Naive thymus-derived CD4-positive, alpha-beta T cell (primary cell): ENCODE measurements at regions of chr3 and their contacts with region 1.

Region 1: GRCh38 chr3:47164007-47164881 is at the start of gene SETD2:
- DNase-seq: peak; percentile 67 to 86 (median 82)
- ATAC-seq: peak; percentile 92
- H3K4me3 ChIP-seq: peak within 1 kb of the TSS; percentile 77
- H3K4me3 Mint-ChIP-seq: peak within 1 kb of the TSS; percentile 90 to 99 (median 98)
- H3K27ac ChIP-seq: peak within 1 kb of the TSS; percentile 96
- H3K27ac Mint-ChIP-seq: peak within 1 kb of the TSS; percentile 94 to 99 (median 99)
- H3K4me1 ChIP-seq: peaks cover 30 to 36% of the 10 kb centered on the region in 2 donors
- H3K4me1 Mint-ChIP-seq: peaks cover 34 to 68% (median 56%) of the 10 kb centered on the region in 7 donors
- H3K27me3 ChIP-seq: no peaks in the 10 kb centered on the region
- H3K27me3 Mint-ChIP-seq: no peaks in the 10 kb centered on the region
- total RNA-seq, gene SETD2: 49.2 to 77.3 (median 71.1) TPM

Region 2: DNA sequence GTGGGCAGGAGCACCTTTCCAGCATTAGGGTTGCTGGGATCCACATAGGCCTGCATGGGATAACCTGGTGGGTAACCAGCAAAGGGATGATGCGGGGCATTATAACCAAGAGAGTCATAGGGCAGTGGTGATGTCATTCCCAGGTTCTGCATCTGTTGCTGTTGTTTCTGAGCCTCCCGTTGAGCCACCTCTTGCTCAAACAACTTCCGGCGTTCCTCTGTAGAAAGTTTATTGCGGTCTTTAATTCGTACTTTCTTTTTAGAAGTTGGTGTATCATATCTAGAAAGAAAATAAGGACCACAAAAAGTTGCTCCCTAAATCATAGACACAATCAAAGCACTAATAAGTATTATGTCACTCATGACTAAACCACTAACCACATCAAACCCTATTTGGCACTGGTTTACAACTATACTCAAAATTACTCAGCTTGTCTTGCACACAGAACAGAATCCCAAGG is 107.0 kb before region 1 on chr3:
- CTCF ChIA-PET with region 1: no interaction called
- POLR2A ChIA-PET with region 1: no interaction called
- intact Hi-C with region 1: loop called in 1 of 2 experiments (anchors 10 kb)
- DNase-seq: peak in 8 of 9 donors; percentile 32 to 75 (median 58)
- ATAC-seq: peak; percentile 88
- H3K4me3 ChIP-seq: no peak overlapping the region
- H3K4me3 Mint-ChIP-seq: peak overlapping the region in 9 of 10 donors; percentile 15 to 60 (median 45)
- H3K27ac ChIP-seq: peak overlapping the region; percentile 23
- H3K27ac Mint-ChIP-seq: peak overlapping the region; percentile 51 to 91 (median 85)
- H3K4me1 ChIP-seq: peaks cover 15 to 18% of the 10 kb centered on the region in 2 donors
- H3K4me1 Mint-ChIP-seq: peaks cover 23 to 60% (median 47%) of the 10 kb centered on the region in 7 donors
- H3K27me3 ChIP-seq: no peaks in the 10 kb centered on the region
- H3K27me3 Mint-ChIP-seq: no peaks in the 10 kb centered on the region

Region 3: GRCh38 chr3:47152578-47152977 is 11.7 kb before region 1 on chr3:
- CTCF ChIA-PET with region 1: interaction called, 5 read pairs
- POLR2A ChIA-PET with region 1: interaction called, 11 read pairs
- intact Hi-C with region 1: loop called in 1 of 2 experiments (anchors 1 kb)
- DNase-seq: no peak
- ATAC-seq: no peak
- H3K4me3 ChIP-seq: no peak overlapping the region
- H3K4me3 Mint-ChIP-seq: peak overlapping the region in 9 of 10 donors; percentile 1 to 65 (median 48)
- H3K27ac ChIP-seq: no peak overlapping the region
- H3K27ac Mint-ChIP-seq: peak overlapping the region in 4 of 9 donors; percentile 14 to 62 (median 39)
- H3K4me1 ChIP-seq: peaks cover 17 to 23% of the 10 kb centered on the region in 2 donors
- H3K4me1 Mint-ChIP-seq: peaks cover 39 to 92% (median 85%) of the 10 kb centered on the region in 7 donors
- H3K27me3 ChIP-seq: no peaks in the 10 kb centered on the region
- H3K27me3 Mint-ChIP-seq: no peaks in the 10 kb centered on the region

Region 4: DNA sequence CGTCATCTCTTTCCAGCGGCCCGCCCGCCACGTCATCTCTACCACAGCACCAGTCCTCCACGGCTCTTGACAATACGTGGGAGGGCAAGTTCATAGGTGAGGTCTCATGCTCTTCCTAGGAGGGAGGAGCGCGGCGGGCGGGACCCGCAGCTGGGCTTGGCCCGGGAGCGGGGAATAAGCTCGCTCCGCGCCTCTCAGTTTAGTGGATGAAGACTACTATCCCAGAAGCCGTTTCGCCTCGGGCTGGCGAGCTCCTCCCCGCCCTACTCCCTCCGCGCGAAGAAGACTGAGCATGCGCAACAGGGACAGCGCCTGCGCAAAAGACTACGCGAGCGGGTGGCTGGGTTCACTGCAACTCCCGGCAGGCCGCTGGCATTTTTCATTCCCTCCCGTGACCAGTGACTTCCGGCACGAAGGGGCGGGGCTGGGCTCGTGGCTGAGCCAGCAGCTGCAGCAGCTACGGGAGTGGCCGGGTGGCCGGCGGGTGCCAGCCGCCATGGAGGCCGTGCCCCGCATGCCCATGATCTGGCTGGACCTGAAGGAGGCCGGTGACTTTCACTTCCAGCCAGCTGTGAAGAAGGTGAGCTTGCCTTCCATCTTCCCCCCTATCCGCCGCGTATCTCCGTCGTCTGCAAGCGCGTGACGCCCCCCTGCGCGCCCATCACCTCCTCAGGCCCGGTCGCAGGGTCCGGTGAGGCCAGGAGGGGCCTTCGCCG is 216.5 kb after region 1 on chr3 and contains the start of gene PTPN23:
- CTCF ChIA-PET with region 1: interaction called, 3 read pairs
- POLR2A ChIA-PET with region 1: no interaction called
- intact Hi-C with region 1: loop called (anchors 1 kb)
- DNase-seq: peak; percentile 96 to 99 (median 99)
- ATAC-seq: peak; percentile 82
- H3K4me3 ChIP-seq: peak within 1 kb of the TSS; percentile 86
- H3K4me3 Mint-ChIP-seq: peak within 1 kb of the TSS; percentile 90 to 100 (median 98)
- H3K27ac ChIP-seq: peak within 1 kb of the TSS; percentile 92
- H3K27ac Mint-ChIP-seq: peak within 1 kb of the TSS; percentile 92 to 100 (median 99)
- H3K4me1 ChIP-seq: peaks cover 23 to 26% of the 10 kb centered on the region in 2 donors
- H3K4me1 Mint-ChIP-seq: peaks cover 40 to 56% (median 48%) of the 10 kb centered on the region in 7 donors
- H3K27me3 ChIP-seq: no peaks in the 10 kb centered on the region
- H3K27me3 Mint-ChIP-seq: peaks cover 0 to 2% (median 0%) of the 10 kb centered on the region in 5 donors
- total RNA-seq, gene PTPN23: 35.8 to 51.2 (median 38.5) TPM

Region 5: GRCh38 chr3:47989981-47990440 is 825.8 kb after region 1 on chr3:
- CTCF ChIA-PET with region 1: no interaction called
- POLR2A ChIA-PET with region 1: no interaction called
- intact Hi-C with region 1: no loop called
- DNase-seq: peak; percentile 25 to 77 (median 66)
- ATAC-seq: peak; percentile 99
- H3K4me3 ChIP-seq: no peak overlapping the region
- H3K4me3 Mint-ChIP-seq: no peak overlapping the region
- H3K27ac ChIP-seq: no peak overlapping the region
- H3K27ac Mint-ChIP-seq: peak overlapping the region in 1 of 9 donors; percentile 43
- H3K4me1 ChIP-seq: no peaks in the 10 kb centered on the region
- H3K4me1 Mint-ChIP-seq: peaks cover 4 to 7% (median 6%) of the 10 kb centered on the region in 7 donors
- H3K27me3 ChIP-seq: no peaks in the 10 kb centered on the region
- H3K27me3 Mint-ChIP-seq: no peaks in the 10 kb centered on the region

Region 6: GRCh38 chr3:48240711-48241491 is 1076.7 kb after region 1 on chr3 and contains the start of gene ZNF589:
- CTCF ChIA-PET with region 1: no interaction called
- POLR2A ChIA-PET with region 1: no interaction called
- intact Hi-C with region 1: loop called in 1 of 2 experiments (anchors 5 kb)
- DNase-seq: peak; percentile 87 to 96 (median 92)
- ATAC-seq: peak; percentile 99
- H3K4me3 ChIP-seq: peak within 1 kb of the TSS; percentile 92
- H3K4me3 Mint-ChIP-seq: peak within 1 kb of the TSS; percentile 82 to 94 (median 92)
- H3K27ac ChIP-seq: peak within 1 kb of the TSS; percentile 79
- H3K27ac Mint-ChIP-seq: peak within 1 kb of the TSS; percentile 88 to 96 (median 93)
- H3K4me1 ChIP-seq: peaks cover 7 to 14% of the 10 kb centered on the region in 2 donors
- H3K4me1 Mint-ChIP-seq: peaks cover 5 to 36% (median 25%) of the 10 kb centered on the region in 7 donors
- H3K27me3 ChIP-seq: no peaks in the 10 kb centered on the region
- H3K27me3 Mint-ChIP-seq: no peaks in the 10 kb centered on the region
- total RNA-seq, gene ZNF589: 37.7 to 64.0 (median 40.2) TPM